Activated CD4-positive, alpha-beta T cell treated with anti-CD3 and anti-CD28 coated beads for 36 hours (primary cell): ENCODE measurements at regions of chr21 and their contacts with region 1.

Region 1: DNA sequence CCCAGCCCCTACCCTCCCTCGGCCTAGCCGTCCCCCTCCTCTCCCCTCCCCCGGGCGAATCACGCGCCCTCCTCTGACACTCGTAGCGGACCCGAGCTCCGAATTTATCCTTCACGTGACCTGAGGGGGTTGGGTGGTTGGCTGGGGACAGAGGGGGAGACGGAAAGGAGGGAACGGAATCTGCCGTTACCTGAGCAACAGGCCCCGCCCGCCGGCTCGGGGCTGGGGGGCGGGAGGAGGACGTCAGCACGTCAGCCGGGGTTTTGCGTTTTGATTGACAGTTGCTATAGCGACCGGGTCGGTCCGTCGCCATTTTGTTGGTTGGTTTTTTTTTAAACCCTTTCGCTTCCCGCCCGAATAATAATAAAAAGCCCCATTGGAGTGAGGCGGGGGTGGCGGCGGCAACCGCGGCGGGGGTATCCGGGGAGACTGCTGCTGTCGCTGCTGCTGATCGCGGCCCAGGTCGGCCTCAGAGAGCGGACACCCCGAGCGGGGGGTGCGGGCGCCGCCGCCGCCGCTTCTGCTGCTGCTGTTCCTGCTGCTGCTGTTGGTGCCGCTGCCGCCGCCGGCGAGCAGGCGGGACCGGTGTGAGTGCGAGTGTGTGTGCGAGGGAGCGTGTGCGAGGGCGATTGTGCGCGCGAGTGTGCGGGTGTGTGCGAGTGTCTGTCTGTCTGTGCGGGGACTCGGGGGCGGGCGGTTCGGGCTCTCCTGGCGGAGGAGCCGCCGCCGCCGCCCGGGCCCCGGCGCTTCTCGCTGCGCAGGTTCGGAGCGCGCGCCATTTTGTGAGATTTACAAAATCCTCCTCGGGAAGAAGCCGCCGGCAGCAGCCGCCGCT is at the start of gene DYRK1A:
- DNase-seq: peak; percentile 98
- ATAC-seq: peak; percentile 82
- H3K4me3 Mint-ChIP-seq: peak within 1 kb of the TSS; percentile 99
- H3K27ac Mint-ChIP-seq: peak within 1 kb of the TSS; percentile 100
- H3K4me1 Mint-ChIP-seq: peaks cover 42% of the 10 kb centered on the region
- H3K27me3 Mint-ChIP-seq: no peaks in the 10 kb centered on the region
- total RNA-seq, gene DYRK1A: 51.1 to 76.9 TPM

Region 2: GRCh38 chr21:36060159-36060921 is 1306.4 kb before region 1 on chr21 and contains the start of gene SETD4:
- CTCF ChIA-PET with region 1: no interaction called
- POLR2A ChIA-PET with region 1: no interaction called
- intact Hi-C with region 1: loop called in 1 of 2 experiments (anchors 10 kb)
- DNase-seq: peak; percentile 95
- ATAC-seq: peak; percentile 92
- H3K4me3 Mint-ChIP-seq: peak within 1 kb of the TSS; percentile 89
- H3K27ac Mint-ChIP-seq: peak within 1 kb of the TSS; percentile 92
- H3K4me1 Mint-ChIP-seq: peaks cover 15% of the 10 kb centered on the region
- H3K27me3 Mint-ChIP-seq: no peaks in the 10 kb centered on the region
- total RNA-seq, gene SETD4: 11.0 to 17.6 TPM

Region 3: DNA sequence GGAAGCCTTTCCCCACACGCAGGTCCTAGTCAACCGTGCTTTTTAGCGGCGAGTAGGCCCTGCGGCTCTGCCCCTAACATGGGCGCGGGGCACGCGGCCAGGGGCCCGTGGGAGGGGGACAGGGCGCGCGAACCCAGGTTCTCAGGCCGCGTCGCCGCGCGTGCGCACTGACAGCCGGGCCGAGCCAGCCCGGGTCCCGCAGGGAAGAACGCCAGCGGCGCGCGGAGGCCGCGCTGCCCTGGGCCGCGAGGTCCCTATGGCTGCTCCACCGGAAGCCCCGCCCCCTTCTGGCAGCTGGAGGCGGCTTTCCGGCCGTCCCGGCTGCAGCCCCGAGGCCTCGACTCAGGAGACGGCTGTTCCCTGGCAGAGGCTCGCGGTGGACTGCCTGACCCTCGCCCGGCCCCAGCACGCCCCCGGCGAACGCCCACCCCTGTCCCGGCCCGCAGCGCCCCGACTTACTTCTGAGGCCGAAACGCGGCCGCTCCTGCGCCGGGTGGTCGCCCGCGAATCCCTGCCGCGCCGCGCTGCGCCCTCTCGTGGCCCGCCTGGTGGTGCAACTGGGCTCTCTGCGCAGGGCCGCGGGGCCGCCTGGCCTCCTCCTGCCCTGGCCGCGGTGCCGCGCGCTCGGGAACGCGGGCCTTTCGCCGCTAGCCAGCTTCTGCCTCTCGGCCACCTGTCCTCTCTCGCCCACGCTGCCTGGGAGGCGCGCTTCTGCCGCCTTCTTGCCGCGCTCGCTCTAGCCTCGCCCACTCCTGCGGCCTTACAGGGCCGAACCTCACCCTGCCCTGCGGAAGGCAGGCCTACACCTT is 376.8 kb before region 1 on chr21:
- CTCF ChIA-PET with region 1: no interaction called
- POLR2A ChIA-PET with region 1: no interaction called
- intact Hi-C with region 1: loop called in 1 of 2 experiments (anchors 5 kb)
- DNase-seq: peak; percentile 94
- ATAC-seq: peak; percentile 88
- H3K4me3 Mint-ChIP-seq: peak overlapping the region; percentile 71
- H3K27ac Mint-ChIP-seq: peak overlapping the region; percentile 88
- H3K4me1 Mint-ChIP-seq: peaks cover 47% of the 10 kb centered on the region
- H3K27me3 Mint-ChIP-seq: no peaks in the 10 kb centered on the region

Region 4: DNA sequence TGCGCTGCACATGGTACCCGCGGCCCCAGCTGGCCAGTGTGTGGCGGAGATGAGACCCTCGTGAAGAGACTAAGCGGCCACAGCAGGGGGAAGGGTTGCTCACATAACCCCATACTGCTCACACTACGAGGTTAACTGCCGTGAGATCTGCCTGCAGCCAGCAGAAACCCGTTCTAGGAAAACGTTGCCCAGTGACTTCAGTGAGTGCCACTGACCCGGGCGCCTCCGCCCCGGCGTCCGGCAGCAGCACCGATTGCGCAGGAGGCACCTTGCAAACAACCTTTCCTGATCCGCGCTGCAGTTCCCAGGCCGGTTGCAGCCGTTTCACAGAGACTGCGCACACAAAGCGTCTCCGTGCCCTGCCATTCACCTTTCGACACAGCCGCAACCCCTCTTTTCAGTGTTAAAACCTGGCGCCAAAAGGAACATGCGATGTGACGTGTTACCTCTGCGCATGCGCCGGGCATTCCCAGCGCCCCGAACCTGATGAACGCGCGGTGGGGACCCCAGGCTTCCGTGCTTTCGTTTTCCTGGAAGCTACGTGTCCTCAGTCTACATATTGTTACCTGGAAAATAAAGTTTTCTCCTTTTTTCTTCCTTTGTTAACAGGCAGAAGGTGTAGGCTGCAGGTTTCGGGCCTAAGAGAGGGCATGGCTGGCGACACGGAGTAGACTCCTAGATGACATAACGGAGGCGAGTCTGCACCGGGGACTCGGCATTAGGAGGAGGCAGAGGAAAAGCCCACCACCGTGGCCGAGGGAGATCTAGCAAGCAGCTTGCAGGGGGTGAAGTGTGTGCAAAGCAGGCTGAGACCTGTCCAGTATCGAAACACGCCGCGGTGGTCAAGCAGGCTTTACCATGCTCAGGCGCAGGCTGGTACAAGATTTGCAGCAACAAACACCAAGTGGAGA is 108.5 kb before region 1 on chr21:
- CTCF ChIA-PET with region 1: interaction called, 3 read pairs
- POLR2A ChIA-PET with region 1: interaction called, 3 read pairs
- intact Hi-C with region 1: loop called in 1 of 2 experiments (anchors 2 kb)
- DNase-seq: peak; percentile 92
- ATAC-seq: peak; percentile 87
- H3K4me3 Mint-ChIP-seq: peak overlapping the region; percentile 79
- H3K27ac Mint-ChIP-seq: peak overlapping the region; percentile 93
- H3K4me1 Mint-ChIP-seq: peaks cover 31% of the 10 kb centered on the region
- H3K27me3 Mint-ChIP-seq: no peaks in the 10 kb centered on the region

Region 5: DNA sequence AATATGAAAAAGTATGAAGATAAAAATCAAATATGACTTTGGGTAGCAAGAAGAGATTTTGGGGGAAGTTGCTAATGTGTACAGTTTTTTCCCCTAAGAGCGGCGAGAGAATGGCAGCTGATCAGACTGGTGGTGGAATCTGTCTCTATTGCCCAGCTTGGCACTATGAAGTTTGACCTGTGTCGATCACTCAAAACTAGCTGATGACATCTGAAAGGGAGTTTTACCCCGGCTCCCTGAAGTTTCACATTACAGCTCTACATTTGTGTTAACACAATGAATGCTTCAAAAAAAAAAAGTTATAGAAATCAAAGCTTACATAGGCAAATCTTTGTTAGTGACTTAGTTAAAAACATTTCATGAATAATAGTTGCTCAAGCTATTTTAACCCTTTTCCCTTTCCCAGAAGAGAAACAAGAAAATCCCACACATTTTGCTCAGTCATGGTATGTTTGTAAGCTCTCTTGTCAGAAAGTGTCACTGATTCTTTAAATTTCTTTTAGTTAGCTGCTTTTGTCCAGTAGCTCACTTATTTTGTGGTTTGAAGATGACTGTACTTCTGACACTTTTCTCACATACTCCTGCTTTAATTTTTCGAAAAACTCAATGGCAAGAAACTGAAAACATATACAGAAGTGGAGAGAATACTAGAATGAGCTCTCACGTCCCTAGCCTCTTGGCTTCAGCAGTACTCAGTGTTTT is 41.2 kb after region 1 on chr21:
- CTCF ChIA-PET with region 1: interaction called, 8 read pairs
- POLR2A ChIA-PET with region 1: interaction called, 6 read pairs
- intact Hi-C with region 1: loop called (anchors 1 to 2 kb)
- DNase-seq: no peak
- ATAC-seq: peak; percentile 57
- H3K4me3 Mint-ChIP-seq: peak overlapping the region; percentile 44
- H3K27ac Mint-ChIP-seq: peak overlapping the region; percentile 75
- H3K4me1 Mint-ChIP-seq: peaks cover 85% of the 10 kb centered on the region
- H3K27me3 Mint-ChIP-seq: no peaks in the 10 kb centered on the region

Region 6: DNA sequence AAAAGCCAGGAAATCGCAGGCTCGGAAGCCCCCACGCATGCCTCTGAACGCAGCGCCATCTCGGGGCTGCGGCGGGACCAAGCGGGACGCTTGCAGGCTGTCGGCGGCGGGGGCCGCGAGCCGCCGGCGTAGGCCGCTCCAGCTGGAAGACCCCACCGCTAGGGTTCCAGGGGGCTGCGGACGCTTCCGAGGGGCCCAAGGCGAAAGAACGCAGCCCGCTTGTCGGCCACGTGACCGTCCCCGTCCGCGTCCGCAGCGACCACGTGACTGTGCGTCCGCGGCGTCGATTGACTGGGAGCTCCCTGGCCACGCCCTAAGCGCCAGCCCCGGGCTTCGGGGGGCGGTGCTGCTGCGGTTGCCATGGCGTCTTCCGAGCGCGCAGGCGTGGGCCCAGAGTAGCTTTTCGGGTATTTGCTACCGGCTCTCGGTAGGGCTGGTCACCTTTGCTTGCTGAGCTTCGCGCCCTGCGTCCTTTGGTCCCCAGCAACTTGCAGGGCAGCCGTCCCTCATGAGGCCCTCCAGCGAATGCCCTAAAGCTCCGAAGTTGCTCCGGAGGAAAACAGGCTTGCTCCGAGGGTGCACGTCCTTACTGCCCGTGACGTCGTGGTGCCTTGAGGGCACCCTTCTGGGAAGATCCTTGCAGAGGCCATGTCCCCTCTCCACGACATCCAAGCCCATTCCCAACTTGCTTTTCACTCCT is 197.1 kb after region 1 on chr21:
- CTCF ChIA-PET with region 1: interaction called, 5 read pairs
- POLR2A ChIA-PET with region 1: interaction called, 14 read pairs
- intact Hi-C with region 1: loop called (anchors 1 to 2 kb)
- DNase-seq: peak; percentile 96
- ATAC-seq: peak; percentile 79
- H3K4me3 Mint-ChIP-seq: peak overlapping the region; percentile 88
- H3K27ac Mint-ChIP-seq: peak overlapping the region; percentile 100
- H3K4me1 Mint-ChIP-seq: peaks cover 23% of the 10 kb centered on the region
- H3K27me3 Mint-ChIP-seq: no peaks in the 10 kb centered on the region

Region 7: GRCh38 chr21:37627074-37627473 is 260.4 kb after region 1 on chr21:
- CTCF ChIA-PET with region 1: no interaction called
- POLR2A ChIA-PET with region 1: no interaction called
- intact Hi-C with region 1: no loop called
- DNase-seq: no peak
- ATAC-seq: no peak
- H3K4me3 Mint-ChIP-seq: no peak overlapping the region
- H3K27ac Mint-ChIP-seq: no peak overlapping the region
- H3K4me1 Mint-ChIP-seq: peaks cover 6% of the 10 kb centered on the region
- H3K27me3 Mint-ChIP-seq: peaks cover 20% of the 10 kb centered on the region